Naive thymus-derived CD4-positive, alpha-beta T cell (primary cell): ENCODE measurements at regions of chr15 and their contacts with region 1.

Region 1: DNA sequence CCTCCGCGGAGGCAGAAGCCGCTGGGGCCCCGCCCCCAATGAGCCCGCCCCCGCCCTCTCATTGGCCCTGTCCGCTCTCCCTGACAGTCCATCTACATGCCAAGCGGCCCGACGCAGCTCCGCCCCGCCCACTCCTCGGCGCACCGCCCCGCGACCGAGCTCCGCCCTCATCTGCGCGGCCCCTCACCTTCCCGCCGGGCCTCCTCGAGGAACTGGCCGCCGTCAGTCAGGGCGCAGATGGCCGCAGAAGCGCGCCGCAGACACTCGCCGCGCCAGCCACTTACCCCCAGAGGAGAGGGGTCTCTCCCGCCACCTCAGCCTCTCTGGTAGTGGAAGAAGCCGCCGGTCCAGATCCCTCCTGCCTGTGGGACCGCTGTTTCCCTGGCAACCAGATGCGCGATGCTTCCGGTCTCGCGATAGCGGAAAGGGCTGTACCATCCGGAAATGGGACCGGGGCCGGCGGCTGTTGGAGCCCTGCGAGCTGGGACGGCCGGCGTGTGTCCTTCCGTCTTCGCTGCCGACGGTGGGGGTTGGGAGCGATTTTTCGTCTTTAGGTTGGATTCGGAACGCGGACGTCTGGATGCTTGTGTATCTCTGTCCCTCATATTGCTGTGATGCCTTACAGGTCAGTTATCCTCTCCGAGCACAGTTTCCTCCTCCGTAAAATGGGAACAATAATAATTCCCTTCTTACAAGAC is at the start of gene FSIP1:
- DNase-seq: peak; percentile 91 to 98 (median 97)
- ATAC-seq: peak; percentile 100
- H3K4me3 ChIP-seq: peak within 1 kb of the TSS; percentile 98
- H3K4me3 Mint-ChIP-seq: peak within 1 kb of the TSS; percentile 74 to 97 (median 90)
- H3K27ac ChIP-seq: peak within 1 kb of the TSS; percentile 80
- H3K27ac Mint-ChIP-seq: peak within 1 kb of the TSS; percentile 70 to 93 (median 90)
- H3K4me1 ChIP-seq: peaks cover 14 to 19% of the 10 kb centered on the region in 2 donors
- H3K4me1 Mint-ChIP-seq: peaks cover 30 to 59% (median 46%) of the 10 kb centered on the region in 7 donors
- H3K27me3 ChIP-seq: no peaks in the 10 kb centered on the region
- H3K27me3 Mint-ChIP-seq: peaks cover 0 to 7% (median 0%) of the 10 kb centered on the region in 5 donors
- total RNA-seq, gene FSIP1: 0.14 to 0.51 (median 0.35) TPM in 4 of 5 experiments, not detected in the other

Region 2: DNA sequence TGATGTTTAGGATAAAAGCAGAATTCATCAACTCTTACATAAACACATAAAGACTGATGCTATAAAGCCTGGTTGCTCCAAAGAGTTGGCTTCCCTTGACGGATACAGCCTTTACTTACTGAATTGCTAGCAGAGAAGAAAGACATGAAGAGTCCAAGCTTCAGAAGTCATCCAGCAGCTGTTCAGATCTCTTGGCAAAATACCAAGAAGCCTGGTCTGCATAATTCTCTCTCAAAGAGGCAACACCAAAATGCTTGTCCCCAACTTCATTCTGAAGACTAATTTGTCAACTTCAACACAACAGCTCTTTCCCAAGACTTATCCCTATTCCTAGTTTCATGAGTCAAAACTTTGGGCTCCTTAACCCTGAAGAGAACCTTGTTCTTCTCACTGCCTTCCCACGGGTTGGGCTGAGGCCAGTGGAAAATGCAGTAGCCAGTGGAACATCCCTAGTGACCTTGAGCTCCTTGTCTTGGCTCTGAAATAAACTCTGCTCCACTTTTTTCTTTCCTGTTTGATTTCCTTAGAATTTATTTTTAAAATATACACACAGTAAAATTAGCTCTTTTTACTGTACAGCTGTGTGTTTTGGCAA is 321.0 kb before region 1 on chr15:
- CTCF ChIA-PET with region 1: no interaction called
- POLR2A ChIA-PET with region 1: no interaction called
- intact Hi-C with region 1: no loop called
- DNase-seq: no peak
- ATAC-seq: no peak
- H3K4me3 ChIP-seq: no peak overlapping the region
- H3K4me3 Mint-ChIP-seq: no peak overlapping the region
- H3K27ac ChIP-seq: no peak overlapping the region
- H3K27ac Mint-ChIP-seq: no peak overlapping the region
- H3K4me1 ChIP-seq: no peaks in the 10 kb centered on the region
- H3K4me1 Mint-ChIP-seq: no peaks in the 10 kb centered on the region
- H3K27me3 ChIP-seq: no peaks in the 10 kb centered on the region
- H3K27me3 Mint-ChIP-seq: peaks cover 0 to 9% (median 5%) of the 10 kb centered on the region in 5 donors

Region 3: DNA sequence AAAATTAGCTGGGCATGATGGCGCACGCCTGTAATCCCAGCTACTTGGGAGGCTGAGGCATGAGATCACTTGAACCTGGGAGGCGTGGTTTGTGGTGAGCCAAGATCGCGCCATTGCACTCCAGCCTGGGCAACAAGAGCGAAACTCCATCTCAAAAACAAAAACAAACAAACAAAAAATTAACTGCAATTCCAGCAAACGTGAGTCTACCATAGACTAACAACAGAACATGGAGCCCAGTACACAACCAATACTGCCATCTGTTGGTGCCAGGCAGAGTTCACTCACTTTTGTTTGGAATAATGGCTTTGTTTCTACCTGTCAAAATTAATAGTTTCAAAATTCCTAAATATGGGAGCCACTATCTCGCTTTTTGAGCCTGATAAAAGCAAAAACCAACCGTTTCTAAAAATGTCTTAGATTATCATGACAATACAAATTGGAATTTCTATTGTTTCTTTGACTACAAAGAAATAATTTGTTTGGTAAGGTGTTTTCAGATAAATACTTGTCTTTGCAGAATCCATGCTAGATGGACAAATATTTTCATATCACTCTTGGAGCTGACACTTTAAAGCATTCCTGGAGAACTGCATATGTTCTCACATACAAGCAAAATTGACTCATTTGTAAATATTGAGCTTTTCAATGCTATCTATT is 92.4 kb after region 1 on chr15:
- CTCF ChIA-PET with region 1: interaction called, 3 read pairs
- POLR2A ChIA-PET with region 1: no interaction called
- intact Hi-C with region 1: loop called in 1 of 2 experiments (anchors 1 kb)
- DNase-seq: peak in 5 of 9 donors; percentile 2 to 21 (median 9)
- ATAC-seq: peak; percentile 51
- H3K4me3 ChIP-seq: no peak overlapping the region
- H3K4me3 Mint-ChIP-seq: no peak overlapping the region
- H3K27ac ChIP-seq: no peak overlapping the region
- H3K27ac Mint-ChIP-seq: no peak overlapping the region
- H3K4me1 ChIP-seq: no peaks in the 10 kb centered on the region
- H3K4me1 Mint-ChIP-seq: no peaks in the 10 kb centered on the region
- H3K27me3 ChIP-seq: no peaks in the 10 kb centered on the region
- H3K27me3 Mint-ChIP-seq: peaks cover 0 to 21% (median 0%) of the 10 kb centered on the region in 5 donors

Region 4: GRCh38 chr15:40108855-40109735 is 326.5 kb after region 1 on chr15 and contains the start of gene BMF:
- CTCF ChIA-PET with region 1: interaction called, 3 read pairs
- POLR2A ChIA-PET with region 1: no interaction called
- intact Hi-C with region 1: loop called (anchors 2 to 5 kb)
- DNase-seq: peak; percentile 87 to 98 (median 90)
- ATAC-seq: peak; percentile 89
- H3K4me3 ChIP-seq: peak within 1 kb of the TSS; percentile 44
- H3K4me3 Mint-ChIP-seq: peak within 1 kb of the TSS; percentile 89 to 99 (median 94)
- H3K27ac ChIP-seq: peak within 1 kb of the TSS; percentile 52
- H3K27ac Mint-ChIP-seq: peak within 1 kb of the TSS; percentile 69 to 92 (median 80)
- H3K4me1 ChIP-seq: peaks cover 24 to 32% of the 10 kb centered on the region in 2 donors
- H3K4me1 Mint-ChIP-seq: peaks cover 35 to 56% (median 49%) of the 10 kb centered on the region in 7 donors
- H3K27me3 ChIP-seq: no peaks in the 10 kb centered on the region
- H3K27me3 Mint-ChIP-seq: peaks cover 0 to 19% (median 8%) of the 10 kb centered on the region in 5 donors
- total RNA-seq, gene BMF: 7.7 to 31.1 (median 19.6) TPM

Region 5: GRCh38 chr15:40197434-40197833 is 414.8 kb after region 1 on chr15:
- CTCF ChIA-PET with region 1: no interaction called
- POLR2A ChIA-PET with region 1: no interaction called
- intact Hi-C with region 1: no loop called
- DNase-seq: peak in 5 of 9 donors; percentile 4 to 33 (median 12)
- ATAC-seq: peak; percentile 41
- H3K4me3 ChIP-seq: no peak overlapping the region
- H3K4me3 Mint-ChIP-seq: peak overlapping the region in 9 of 10 donors; percentile 10 to 79 (median 47)
- H3K27ac ChIP-seq: no peak overlapping the region
- H3K27ac Mint-ChIP-seq: peak overlapping the region in 4 of 9 donors; percentile 5 to 84 (median 52)
- H3K4me1 ChIP-seq: peaks cover 9 to 19% of the 10 kb centered on the region in 2 donors
- H3K4me1 Mint-ChIP-seq: peaks cover 14 to 44% (median 29%) of the 10 kb centered on the region in 7 donors
- H3K27me3 ChIP-seq: no peaks in the 10 kb centered on the region
- H3K27me3 Mint-ChIP-seq: no peaks in the 10 kb centered on the region

Region 6: DNA sequence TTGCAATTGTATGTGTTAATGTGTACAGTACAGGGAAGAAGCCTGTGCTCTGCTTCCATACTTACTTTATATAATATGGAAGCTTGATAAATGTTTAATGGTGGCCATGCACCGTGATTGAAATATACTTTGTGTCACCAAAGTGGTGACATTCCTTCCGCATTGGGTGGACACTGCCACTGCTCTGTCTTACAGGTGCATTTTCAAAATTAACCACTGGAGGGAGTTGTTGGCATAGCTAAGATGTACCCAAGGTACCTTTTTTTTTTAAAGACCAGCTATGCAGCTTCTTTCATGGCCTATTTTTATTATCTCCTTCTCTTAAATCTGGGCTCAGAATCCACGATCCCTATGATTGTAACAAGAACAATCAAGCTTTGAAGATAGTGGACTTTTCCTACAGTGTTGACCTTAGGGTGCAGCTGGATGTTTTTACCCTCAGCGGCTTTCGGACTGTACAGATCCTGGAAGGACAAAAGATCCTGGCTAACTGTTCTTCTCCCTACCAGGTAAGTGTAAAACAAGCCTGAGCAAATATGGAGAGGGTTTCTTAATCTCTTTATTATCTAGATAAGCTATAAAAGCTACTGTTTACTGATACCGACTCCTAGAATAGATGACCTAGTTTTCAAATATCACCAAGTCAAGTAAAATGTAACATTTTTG is 434.7 kb after region 1 on chr15:
- CTCF ChIA-PET with region 1: no interaction called
- POLR2A ChIA-PET with region 1: no interaction called
- intact Hi-C with region 1: loop called in 1 of 2 experiments (anchors 2 kb)
- DNase-seq: peak in 7 of 9 donors; percentile 50 to 75 (median 63)
- ATAC-seq: peak; percentile 96
- H3K4me3 ChIP-seq: no peak overlapping the region
- H3K4me3 Mint-ChIP-seq: no peak overlapping the region
- H3K27ac ChIP-seq: no peak overlapping the region
- H3K27ac Mint-ChIP-seq: no peak overlapping the region
- H3K4me1 ChIP-seq: no peaks in the 10 kb centered on the region
- H3K4me1 Mint-ChIP-seq: peaks cover 0 to 2% (median 0%) of the 10 kb centered on the region in 7 donors
- H3K27me3 ChIP-seq: no peaks in the 10 kb centered on the region
- H3K27me3 Mint-ChIP-seq: no peaks in the 10 kb centered on the region

Region 7: DNA sequence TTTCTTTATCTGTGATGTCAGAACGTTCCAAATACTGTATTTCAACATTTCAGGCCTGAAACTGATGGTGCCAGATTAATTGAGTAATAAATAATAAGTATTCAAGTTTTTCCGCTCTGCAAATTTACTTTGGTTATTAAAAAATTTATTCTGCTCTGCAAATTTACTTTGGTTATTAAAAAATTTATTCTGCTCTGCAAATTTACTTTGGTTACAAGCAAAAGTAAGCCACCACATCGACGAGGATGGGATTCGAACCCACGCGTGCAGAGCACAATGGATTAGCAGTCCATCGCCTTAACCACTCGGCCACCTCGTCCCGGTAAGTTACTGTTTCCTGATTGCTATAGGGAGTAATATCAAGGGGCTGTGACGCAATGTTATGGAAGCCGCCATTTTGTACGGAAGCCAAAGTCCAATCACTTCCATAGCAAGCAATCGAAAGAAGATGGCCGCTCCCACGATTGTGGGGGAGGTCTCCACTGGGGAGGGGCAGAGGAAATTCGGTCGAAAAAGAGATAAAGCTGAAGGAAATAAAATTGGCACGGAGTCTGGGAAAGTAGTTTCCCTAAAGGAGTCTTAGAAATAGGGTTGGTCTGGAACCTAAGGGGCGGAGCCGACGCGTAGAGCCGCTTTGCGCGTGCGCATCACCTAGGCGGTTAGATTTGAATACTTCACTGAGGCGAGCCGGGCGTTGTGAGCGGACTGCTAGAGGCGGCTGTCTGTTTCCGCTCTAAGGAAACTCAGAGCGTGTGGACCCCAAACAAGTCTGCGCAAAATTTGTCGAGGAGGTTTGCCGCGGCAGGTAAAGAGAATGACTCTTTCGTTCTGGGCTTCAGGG is 811.2 kb after region 1 on chr15 and contains the start of gene KNL1:
- CTCF ChIA-PET with region 1: no interaction called
- POLR2A ChIA-PET with region 1: no interaction called
- intact Hi-C with region 1: loop called in 1 of 2 experiments (anchors 10 kb)
- DNase-seq: peak; percentile 83 to 94 (median 91)
- ATAC-seq: peak; percentile 85
- H3K4me3 ChIP-seq: peak within 1 kb of the TSS; percentile 98
- H3K4me3 Mint-ChIP-seq: peak within 1 kb of the TSS; percentile 91 to 99 (median 96)
- H3K27ac ChIP-seq: peak within 1 kb of the TSS; percentile 83
- H3K27ac Mint-ChIP-seq: peak within 1 kb of the TSS; percentile 91 to 100 (median 98)
- H3K4me1 ChIP-seq: peaks cover 11 to 12% of the 10 kb centered on the region in 2 donors
- H3K4me1 Mint-ChIP-seq: peaks cover 13 to 41% (median 25%) of the 10 kb centered on the region in 7 donors
- H3K27me3 ChIP-seq: no peaks in the 10 kb centered on the region
- H3K27me3 Mint-ChIP-seq: peaks cover 0 to 12% (median 6%) of the 10 kb centered on the region in 5 donors
- total RNA-seq, gene KNL1: 0.16 to 41.5 (median 1.7) TPM